ENCODE measurements at regions of chrX and their contacts with region 1.

Region 1: DNA sequence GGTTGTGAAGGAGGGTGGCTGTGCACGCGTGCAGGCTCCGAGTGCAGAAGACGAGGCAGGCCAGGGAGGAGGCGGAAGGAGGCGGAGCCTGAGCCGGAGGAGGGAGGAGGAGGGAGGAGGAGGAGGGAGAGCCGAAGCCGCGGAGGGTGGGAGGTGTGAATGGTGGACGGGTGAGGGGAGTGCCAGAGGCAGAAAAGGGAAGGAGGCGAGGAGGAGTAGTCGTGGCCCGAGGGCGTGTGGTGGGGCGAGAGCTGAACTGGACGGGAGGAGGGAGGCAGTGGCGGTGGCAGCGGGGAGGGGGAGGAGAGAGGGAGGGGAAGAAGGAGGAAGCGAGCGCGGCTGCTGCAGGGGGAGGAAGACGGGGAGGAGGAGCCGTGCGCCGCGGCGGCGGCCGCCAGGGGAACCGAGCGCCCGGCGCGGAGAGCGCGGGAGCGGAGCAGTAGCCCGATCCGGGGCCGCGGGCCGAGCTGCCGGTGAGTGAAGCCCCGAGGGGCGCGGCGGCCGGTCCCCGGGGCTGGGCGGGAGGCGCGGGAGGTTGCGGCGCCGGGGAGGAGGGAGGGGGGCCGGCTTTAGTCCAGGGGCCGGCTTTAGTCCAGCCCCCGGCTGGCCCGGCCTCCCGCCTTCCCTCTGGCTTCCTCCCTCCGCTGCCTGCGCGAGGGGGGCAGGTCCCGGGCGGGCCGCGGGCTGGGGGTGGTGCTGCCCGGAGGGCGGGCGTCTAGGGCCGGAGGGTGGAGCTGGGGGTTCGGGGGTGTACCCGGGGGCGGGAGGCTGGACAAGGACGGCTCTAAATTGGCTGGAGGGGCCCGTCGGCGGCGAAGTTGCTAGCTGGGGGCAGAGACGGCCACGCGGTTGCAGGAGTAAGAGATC is at the start of gene TMEM164:
- DNase-seq: peak; percentile 95
- total RNA-seq, gene TMEM164: 39.9 TPM

Region 2: GRCh38 chrX:109714340-109714958 is 288.1 kb before region 1 on chrX:
- intact Hi-C with region 1: loop called (anchors 10 kb)
- DNase-seq: no peak

Region 3: GRCh38 chrX:109797311-109797975 is 205.1 kb before region 1 on chrX:
- intact Hi-C with region 1: no loop called
- DNase-seq: no peak

Region 4: DNA sequence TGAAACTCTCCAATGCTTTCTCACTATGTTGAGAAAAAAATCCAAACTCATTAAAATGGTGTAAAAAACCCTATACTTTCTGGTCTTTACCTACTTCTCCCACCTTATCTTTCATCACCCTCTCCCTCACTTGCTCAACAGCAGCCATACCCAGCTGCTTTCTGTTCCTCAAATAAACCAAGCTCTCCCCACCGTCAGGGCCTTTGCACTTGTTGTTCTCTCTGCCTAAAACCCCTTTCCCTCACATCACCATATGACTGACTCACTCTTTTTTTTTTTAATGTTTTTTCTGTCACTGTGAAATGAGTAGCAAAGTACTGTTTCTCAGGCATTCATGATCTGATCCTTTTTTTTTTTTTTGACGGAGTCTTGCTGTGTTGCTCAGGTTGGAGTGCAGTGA is 121.9 kb before region 1 on chrX:
- intact Hi-C with region 1: no loop called
- DNase-seq: no peak

Region 5: DNA sequence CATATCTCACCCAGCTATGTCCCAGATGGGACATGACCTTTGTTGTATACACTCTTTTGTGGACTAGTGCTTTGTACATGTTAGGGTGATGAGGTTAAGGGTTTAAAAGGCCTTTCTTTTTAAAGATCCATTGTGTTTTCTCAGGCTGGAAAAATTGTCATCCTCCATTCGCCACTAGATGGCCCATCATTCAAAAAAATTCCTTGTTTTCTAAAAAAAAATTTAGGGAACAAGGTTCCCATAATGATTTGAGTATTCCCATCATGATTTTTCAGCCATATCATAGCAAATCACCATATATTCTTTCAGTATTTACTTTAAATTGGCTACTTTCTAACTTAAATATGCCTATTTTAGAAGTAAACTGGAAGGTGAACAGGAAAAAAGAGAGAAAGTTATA is 91.5 kb before region 1 on chrX:
- intact Hi-C with region 1: loop called (anchors 5 kb)
- DNase-seq: no peak

Region 6: DNA sequence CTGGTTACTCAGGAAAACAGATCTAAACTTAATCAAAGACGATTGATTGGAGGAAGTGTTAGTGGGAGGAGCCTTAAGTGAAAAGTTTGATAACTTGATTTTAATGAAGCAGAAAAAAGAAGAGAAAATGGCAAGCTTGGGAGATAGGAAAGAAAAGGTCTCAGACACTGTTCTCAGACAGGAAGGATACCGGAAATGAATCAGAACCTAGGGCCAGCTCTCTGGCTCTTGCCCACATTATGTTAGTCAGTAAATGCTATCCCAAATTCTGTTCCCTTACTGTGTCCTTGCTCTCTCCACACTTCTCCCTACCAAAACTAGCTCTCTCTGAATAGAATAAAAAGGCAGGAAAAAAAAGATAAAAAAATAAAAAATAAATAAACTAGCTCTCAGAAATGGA is 48.2 kb before region 1 on chrX:
- intact Hi-C with region 1: loop called (anchors 1 kb)
- DNase-seq: no peak

Measured in cardiac septum (tissue), 1 donor.